Activated B cell treated with CpG ODN at 0.5 μM for 24 hours (primary cell): ENCODE measurements at regions of chr16 and their contacts with region 1.

Region 1: GRCh38 chr16:87778830-87779579 is 13.2 kb upstream of the KLHDC4 start:
- DNase-seq: peak; percentile 96
- ATAC-seq: peak; percentile 81
- H3K4me3 Mint-ChIP-seq: peak overlapping the region; percentile 64
- H3K27ac Mint-ChIP-seq: peak overlapping the region; percentile 95
- H3K4me1 Mint-ChIP-seq: peaks cover 44% of the 10 kb centered on the region
- H3K27me3 Mint-ChIP-seq: no peaks in the 10 kb centered on the region
- CTCF ChIP-seq: peak; percentile 74

Region 2: GRCh38 chr16:87492721-87493607 is 286.0 kb before region 1 on chr16 and contains the start of gene ZCCHC14:
- CTCF ChIA-PET with region 1: no interaction called
- POLR2A ChIA-PET with region 1: no interaction called
- intact Hi-C with region 1: loop called (anchors 10 kb)
- DNase-seq: peak; percentile 89
- ATAC-seq: peak; percentile 91
- H3K4me3 Mint-ChIP-seq: peak within 1 kb of the TSS; percentile 82
- H3K27ac Mint-ChIP-seq: peak within 1 kb of the TSS; percentile 59
- H3K4me1 Mint-ChIP-seq: peaks cover 46% of the 10 kb centered on the region
- H3K27me3 Mint-ChIP-seq: peaks cover 22% of the 10 kb centered on the region
- CTCF ChIP-seq: no peak
- total RNA-seq, gene ZCCHC14: 3.4 and 3.8 TPM in 2 replicates

Region 3: GRCh38 chr16:87834623-87835407 is 55.8 kb after region 1 on chr16:
- CTCF ChIA-PET with region 1: interaction called, 22 read pairs
- POLR2A ChIA-PET with region 1: interaction called, 15 read pairs
- intact Hi-C with region 1: loop called (anchors 1 kb)
- DNase-seq: no peak
- ATAC-seq: no peak
- H3K4me3 Mint-ChIP-seq: no peak overlapping the region
- H3K27ac Mint-ChIP-seq: no peak overlapping the region
- H3K4me1 Mint-ChIP-seq: peaks cover 26% of the 10 kb centered on the region
- H3K27me3 Mint-ChIP-seq: no peaks in the 10 kb centered on the region
- CTCF ChIP-seq: no peak

Region 4: GRCh38 chr16:87877938-87878507 is 99.0 kb after region 1 on chr16:
- CTCF ChIA-PET with region 1: interaction called, 292 read pairs
- POLR2A ChIA-PET with region 1: interaction called, 281 read pairs
- intact Hi-C with region 1: no loop called
- DNase-seq: no peak
- ATAC-seq: peak; percentile 32
- H3K4me3 Mint-ChIP-seq: no peak overlapping the region
- H3K27ac Mint-ChIP-seq: no peak overlapping the region
- H3K4me1 Mint-ChIP-seq: peaks cover 10% of the 10 kb centered on the region
- H3K27me3 Mint-ChIP-seq: peaks cover 8% of the 10 kb centered on the region
- CTCF ChIP-seq: no peak

Region 5: GRCh38 chr16:87924422-87925298 is 145.7 kb after region 1 on chr16:
- CTCF ChIA-PET with region 1: interaction called, 10 read pairs
- POLR2A ChIA-PET with region 1: interaction called, 6 read pairs
- intact Hi-C with region 1: loop called (anchors 1 kb)
- DNase-seq: peak; percentile 61
- ATAC-seq: peak; percentile 81
- H3K4me3 Mint-ChIP-seq: peak overlapping the region; percentile 64
- H3K27ac Mint-ChIP-seq: peak overlapping the region; percentile 70
- H3K4me1 Mint-ChIP-seq: peaks cover 35% of the 10 kb centered on the region
- H3K27me3 Mint-ChIP-seq: peaks cover 3% of the 10 kb centered on the region
- CTCF ChIP-seq: no peak

Region 6: DNA sequence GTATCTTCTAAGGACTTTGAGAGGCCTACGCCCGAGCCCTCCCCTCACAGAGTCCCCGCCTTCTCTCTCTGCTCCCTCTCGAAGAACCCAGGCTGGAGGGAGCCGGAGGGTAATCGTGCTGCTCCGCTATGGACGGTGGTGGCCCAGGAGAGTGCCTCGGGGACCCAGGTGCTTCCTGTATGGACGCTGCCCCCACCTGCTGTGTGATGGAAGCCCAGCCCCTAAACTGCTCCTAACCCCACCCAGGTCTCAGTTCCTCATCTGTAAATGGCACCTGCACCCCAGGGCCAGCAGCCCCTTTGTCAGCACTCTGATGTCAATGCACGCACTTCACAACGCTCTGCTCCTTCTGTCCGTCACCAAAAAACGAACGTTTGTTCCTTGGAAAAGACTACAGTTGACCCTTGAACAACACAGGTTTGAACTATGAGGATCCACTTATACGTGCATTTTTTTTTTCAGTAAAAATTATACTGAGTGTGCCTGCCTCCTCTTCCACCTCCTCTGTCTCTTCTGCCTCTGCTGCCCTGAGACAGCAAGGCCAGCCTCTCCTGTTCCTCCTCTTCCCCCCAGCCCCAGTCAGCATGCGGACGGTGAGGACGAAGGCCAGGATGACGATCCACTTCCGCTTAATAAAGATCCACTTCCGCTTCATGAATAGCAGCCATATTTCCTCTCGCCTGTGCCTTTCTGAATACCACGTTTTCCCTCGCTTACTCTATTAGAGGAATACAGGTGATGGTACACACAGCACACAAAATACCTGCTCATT is 290.6 kb after region 1 on chr16:
- CTCF ChIA-PET with region 1: no interaction called
- POLR2A ChIA-PET with region 1: interaction called, 3 read pairs
- intact Hi-C with region 1: loop called (anchors 1 kb)
- DNase-seq: peak; percentile 79
- ATAC-seq: peak; percentile 93
- H3K4me3 Mint-ChIP-seq: peak overlapping the region; percentile 74
- H3K27ac Mint-ChIP-seq: peak overlapping the region; percentile 96
- H3K4me1 Mint-ChIP-seq: peaks cover 50% of the 10 kb centered on the region
- H3K27me3 Mint-ChIP-seq: no peaks in the 10 kb centered on the region
- CTCF ChIP-seq: no peak